ENCODE measurements at regions of chr22 and their contacts with region 1.

Region 1: GRCh38 chr22:22110548-22111266 is 128.1 kb upstream of the TOP3B start:
- DNase-seq: peak; percentile 83
- H3K4me3 Mint-ChIP-seq: no peak overlapping the region
- H3K27ac Mint-ChIP-seq: peak overlapping the region; percentile 79
- H3K4me1 Mint-ChIP-seq: peaks cover 13% of the 10 kb centered on the region
- H3K27me3 Mint-ChIP-seq: no peaks in the 10 kb centered on the region
- CTCF ChIP-seq: peak; percentile 58

Region 2: DNA sequence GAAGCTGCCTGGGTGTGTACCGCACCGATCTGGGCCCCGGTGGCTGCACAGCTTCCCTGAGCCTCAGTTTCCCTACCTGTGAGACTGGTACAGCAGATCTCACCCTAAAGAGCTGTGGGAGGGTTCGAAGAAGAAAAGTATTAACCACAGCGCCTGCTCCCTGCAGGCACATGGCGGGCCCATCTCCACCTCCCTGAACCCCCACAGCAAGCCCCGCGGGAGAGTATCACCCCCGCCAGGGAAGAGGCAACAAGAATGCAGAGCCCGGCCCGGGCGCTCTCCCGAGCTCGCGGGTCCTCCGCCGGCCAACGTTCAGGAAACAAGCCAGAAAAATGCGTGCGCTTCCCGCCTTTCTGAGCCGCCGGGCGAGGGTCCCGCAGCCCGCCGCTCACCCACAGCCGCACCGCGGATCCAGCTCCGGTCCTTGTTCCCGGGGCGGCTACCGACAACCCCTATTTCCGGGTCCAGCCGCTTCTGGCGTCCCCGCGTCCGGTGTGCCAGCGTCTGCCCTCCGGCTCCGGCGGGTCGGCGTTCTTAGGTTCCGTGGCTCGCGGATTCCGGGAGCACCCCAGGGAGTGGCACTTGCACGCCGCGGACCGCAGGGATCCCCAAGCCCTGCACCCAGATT is 128.3 kb before region 1 on chr22 and contains the start of gene TOP3B:
- CTCF ChIA-PET with region 1: interaction called, 7 read pairs
- POLR2A ChIA-PET with region 1: interaction called, 8 read pairs
- intact Hi-C with region 1: loop called (anchors 10 kb)
- DNase-seq: peak; percentile 78
- H3K4me3 Mint-ChIP-seq: peak within 1 kb of the TSS; percentile 82
- H3K27ac Mint-ChIP-seq: peak within 1 kb of the TSS; percentile 79
- H3K4me1 Mint-ChIP-seq: no peaks in the 10 kb centered on the region
- H3K27me3 Mint-ChIP-seq: no peaks in the 10 kb centered on the region
- CTCF ChIP-seq: no peak
- total RNA-seq, gene TOP3B: 29.3 and 37.0 TPM in 2 replicates

Region 3: GRCh38 chr22:22060200-22061084 is 50.3 kb before region 1 on chr22:
- CTCF ChIA-PET with region 1: interaction called, 14 read pairs
- POLR2A ChIA-PET with region 1: interaction called, 3 read pairs
- intact Hi-C with region 1: loop called (anchors 2 kb)
- DNase-seq: peak; percentile 61
- H3K4me3 Mint-ChIP-seq: no peak overlapping the region
- H3K27ac Mint-ChIP-seq: no peak overlapping the region
- H3K4me1 Mint-ChIP-seq: peaks cover 9% of the 10 kb centered on the region
- H3K27me3 Mint-ChIP-seq: peaks cover 26% of the 10 kb centered on the region
- CTCF ChIP-seq: peak; percentile 89

Region 4: GRCh38 chr22:22074634-22075381 is 35.9 kb before region 1 on chr22:
- CTCF ChIA-PET with region 1: interaction called, 6 read pairs
- POLR2A ChIA-PET with region 1: interaction called, 9 read pairs
- intact Hi-C with region 1: loop called (anchors 2 kb)
- DNase-seq: no peak
- H3K4me3 Mint-ChIP-seq: peak overlapping the region; percentile 20
- H3K27ac Mint-ChIP-seq: peak overlapping the region; percentile 78
- H3K4me1 Mint-ChIP-seq: peaks cover 48% of the 10 kb centered on the region
- H3K27me3 Mint-ChIP-seq: no peaks in the 10 kb centered on the region
- CTCF ChIP-seq: no peak

Region 5: GRCh38 chr22:22156716-22157347 is 46.1 kb after region 1 on chr22:
- CTCF ChIA-PET with region 1: interaction called, 3 read pairs
- POLR2A ChIA-PET with region 1: no interaction called
- intact Hi-C with region 1: loop called (anchors 2 kb)
- DNase-seq: peak; percentile 75
- H3K4me3 Mint-ChIP-seq: no peak overlapping the region
- H3K27ac Mint-ChIP-seq: peak overlapping the region; percentile 9
- H3K4me1 Mint-ChIP-seq: no peaks in the 10 kb centered on the region
- H3K27me3 Mint-ChIP-seq: peaks cover 33% of the 10 kb centered on the region
- CTCF ChIP-seq: peak; percentile 69

Region 6: GRCh38 chr22:22207845-22208564 is 97.3 kb after region 1 on chr22:
- CTCF ChIA-PET with region 1: interaction called, 3 read pairs
- POLR2A ChIA-PET with region 1: no interaction called
- intact Hi-C with region 1: loop called (anchors 5 kb)
- DNase-seq: peak; percentile 81
- H3K4me3 Mint-ChIP-seq: no peak overlapping the region
- H3K27ac Mint-ChIP-seq: no peak overlapping the region
- H3K4me1 Mint-ChIP-seq: peaks cover 18% of the 10 kb centered on the region
- H3K27me3 Mint-ChIP-seq: no peaks in the 10 kb centered on the region
- CTCF ChIP-seq: peak; percentile 76